Mammary epithelial cell (primary cell): ENCODE measurements at regions of chr21 and their contacts with region 1.

Region 1: DNA sequence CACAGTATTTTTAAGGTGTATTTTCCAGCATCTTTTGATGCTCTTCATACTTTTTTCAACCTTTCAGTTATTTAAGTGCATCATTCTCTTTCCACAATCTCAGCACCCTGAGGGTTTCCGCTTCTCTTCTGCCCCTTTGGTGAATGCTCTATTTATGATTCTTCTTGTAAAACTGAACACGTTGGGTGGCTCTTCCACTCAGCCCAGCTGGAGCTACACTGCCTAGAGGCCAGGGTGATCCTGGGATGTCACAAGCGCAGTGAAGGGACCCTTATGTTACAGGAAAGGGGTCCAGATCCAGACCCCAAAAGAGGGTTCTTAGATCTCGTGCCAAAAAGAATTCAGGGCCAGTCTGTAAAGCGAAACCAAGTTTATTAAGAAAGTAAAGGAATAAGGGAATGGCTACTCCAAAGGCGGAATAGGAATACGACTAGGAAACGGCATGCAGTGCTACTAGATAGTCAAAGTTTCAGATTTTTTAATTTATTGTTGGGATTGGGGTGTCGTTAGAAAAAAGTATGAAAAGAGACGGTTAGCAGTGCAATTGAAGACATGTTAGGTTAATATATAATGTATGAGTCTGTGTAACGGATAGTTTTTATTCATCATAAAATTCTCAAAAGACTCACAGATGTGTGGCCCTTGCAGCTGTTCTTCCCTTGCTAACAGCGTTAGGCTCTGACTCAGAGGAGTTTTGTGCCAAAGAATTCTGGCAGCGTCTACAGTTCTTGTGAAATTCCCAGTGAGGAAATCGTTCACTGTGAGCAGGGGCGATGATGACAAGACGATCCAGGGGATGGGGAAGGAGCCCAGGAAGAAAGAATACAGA is 14.4 kb upstream of the ERVH48-1 start:
- DNase-seq: peak; percentile 97
- H3K4me3 ChIP-seq: peak overlapping the region in 1 of 3 experiments; percentile 2
- H3K27ac ChIP-seq: no peak overlapping the region
- H3K4me1 ChIP-seq: peaks cover 6% of the 10 kb centered on the region
- H3K27me3 ChIP-seq: no peaks in the 10 kb centered on the region
- CTCF ChIP-seq: no peak

Region 2: DNA sequence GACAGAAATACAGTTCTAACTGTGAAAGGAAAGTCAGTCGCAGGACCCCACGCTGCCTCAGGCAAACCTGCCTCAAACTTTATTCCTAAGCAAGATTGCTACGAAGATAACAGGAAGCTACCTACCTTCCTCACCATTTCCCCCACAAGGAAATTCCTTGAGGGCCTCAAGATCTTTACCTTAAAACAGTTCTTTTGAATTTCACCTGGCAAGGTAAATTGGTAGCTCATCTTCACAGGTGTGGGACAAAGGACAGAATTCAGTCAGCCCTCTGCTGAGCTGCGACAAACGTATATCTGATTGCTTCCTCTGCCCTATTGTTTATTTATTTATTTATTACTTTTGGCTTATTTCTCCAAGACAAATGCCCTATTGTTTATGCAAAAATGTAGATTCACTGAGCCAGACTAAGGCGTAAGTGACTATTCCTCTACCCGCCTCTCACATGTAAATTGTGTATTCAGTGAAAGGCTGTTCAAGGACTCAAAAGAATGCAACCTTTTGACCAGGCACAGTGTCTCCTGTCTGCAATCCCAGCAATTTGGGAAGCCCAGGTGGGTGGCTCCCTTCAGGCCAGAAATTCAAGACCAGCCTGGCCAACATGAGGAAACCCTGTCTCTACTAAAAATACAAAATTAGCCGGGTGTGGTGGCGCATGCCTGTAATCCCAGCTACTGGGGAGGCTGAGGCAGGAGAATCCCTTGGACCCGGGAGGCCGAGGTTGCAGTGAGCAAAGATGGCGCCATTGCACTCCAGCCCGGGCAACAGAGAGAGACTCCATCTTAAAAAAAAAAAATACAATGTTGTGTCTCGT is 17.2 kb after region 1 on chr21:
- CTCF ChIA-PET with region 1: no interaction called
- dilution Hi-C with region 1: no loop called
- in situ Hi-C with region 1: no loop called
- intact Hi-C with region 1: loop called (anchors 2 kb)
- DNase-seq: no peak
- H3K4me3 ChIP-seq: no peak overlapping the region
- H3K27ac ChIP-seq: no peak overlapping the region
- H3K4me1 ChIP-seq: peaks cover 23% of the 10 kb centered on the region
- H3K27me3 ChIP-seq: no peaks in the 10 kb centered on the region
- CTCF ChIP-seq: no peak

Region 3: GRCh38 chr21:43034098-43034497 is 94.3 kb after region 1 on chr21:
- CTCF ChIA-PET with region 1: no interaction called
- dilution Hi-C with region 1: no loop called
- in situ Hi-C with region 1: no loop called
- intact Hi-C with region 1: no loop called
- DNase-seq: no peak
- H3K4me3 ChIP-seq: no peak overlapping the region
- H3K27ac ChIP-seq: no peak overlapping the region
- H3K4me1 ChIP-seq: no peaks in the 10 kb centered on the region
- H3K27me3 ChIP-seq: no peaks in the 10 kb centered on the region
- CTCF ChIP-seq: no peak